ENCODE measurements at regions of chr22 and their contacts with region 1.

Region 1: GRCh38 chr22:23069502-23070357 is 589 bp upstream of the GNAZ start:
- DNase-seq: peak; percentile 79 to 95 (median 87)
- ATAC-seq: peak; percentile 95
- H3K4me3 ChIP-seq: peak overlapping the region; percentile 44 to 49
- H3K4me3 Mint-ChIP-seq: peak overlapping the region; percentile 86
- H3K27ac ChIP-seq: peak overlapping the region in 1 of 2 experiments; percentile 33
- H3K27ac Mint-ChIP-seq: no peak overlapping the region
- H3K4me1 ChIP-seq: peaks cover 11% of the 10 kb centered on the region
- H3K4me1 Mint-ChIP-seq: peaks cover 16% of the 10 kb centered on the region
- H3K27me3 ChIP-seq: no peaks in the 10 kb centered on the region
- H3K27me3 Mint-ChIP-seq: peaks cover 13% of the 10 kb centered on the region
- CTCF ChIP-seq: no peak

Region 2: DNA sequence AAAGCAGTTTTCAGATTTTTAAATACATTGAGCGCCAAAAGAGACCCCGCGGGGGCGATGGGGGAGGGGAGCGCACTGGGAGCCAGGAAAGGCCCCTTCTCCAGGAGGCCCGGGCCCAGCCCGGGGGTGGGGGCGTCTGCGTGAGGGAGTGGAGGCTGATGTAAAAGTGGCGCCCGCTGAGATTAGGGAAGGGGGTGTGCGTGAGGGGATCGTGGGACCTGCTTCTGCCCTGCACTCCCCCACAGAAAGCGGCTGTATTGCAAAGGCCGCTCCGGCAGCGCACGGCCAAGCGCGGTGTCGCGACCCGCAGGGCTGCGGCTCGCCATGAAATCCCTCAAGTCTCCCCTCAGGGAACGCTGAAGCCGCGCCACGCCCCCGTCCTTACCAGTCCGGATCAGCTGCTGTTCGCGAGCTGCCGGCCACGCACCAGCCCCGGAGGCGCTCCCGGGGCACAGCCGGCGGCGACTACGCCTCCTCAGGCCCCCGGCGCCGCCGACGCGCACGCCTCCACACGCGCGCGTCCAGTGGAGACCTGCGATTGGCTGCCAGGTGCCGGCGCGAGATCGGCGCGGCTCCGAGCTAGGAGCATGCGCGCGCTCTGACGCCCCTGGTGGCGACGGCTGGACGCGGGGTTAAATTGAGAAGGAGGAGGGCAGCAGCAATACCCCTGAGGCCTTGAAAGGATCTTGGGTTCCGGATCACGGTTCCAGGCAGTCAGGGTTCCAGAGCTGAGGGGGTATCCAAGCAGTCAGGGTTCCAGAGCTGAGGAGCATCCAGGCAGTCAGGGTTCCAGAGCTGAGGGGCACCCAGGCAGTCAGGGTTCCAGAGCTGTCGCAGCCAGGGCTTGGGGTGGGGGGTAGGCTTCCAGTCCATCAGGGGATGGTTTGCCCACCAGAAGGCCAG is 561.2 kb before region 1 on chr22 and contains the start of gene ZNF280B:
- CTCF ChIA-PET with region 1: no interaction called
- POLR2A ChIA-PET with region 1: no interaction called
- intact Hi-C with region 1: no loop called
- DNase-seq: peak; percentile 67 to 91 (median 80)
- ATAC-seq: peak; percentile 99
- H3K4me3 ChIP-seq: peak within 1 kb of the TSS; percentile 77 to 84
- H3K4me3 Mint-ChIP-seq: peak within 1 kb of the TSS; percentile 83
- H3K27ac ChIP-seq: peak within 1 kb of the TSS; percentile 45 to 57
- H3K27ac Mint-ChIP-seq: peak within 1 kb of the TSS; percentile 37
- H3K4me1 ChIP-seq: peaks cover 11% of the 10 kb centered on the region
- H3K4me1 Mint-ChIP-seq: peaks cover 22% of the 10 kb centered on the region
- H3K27me3 ChIP-seq: no peaks in the 10 kb centered on the region
- H3K27me3 Mint-ChIP-seq: peaks cover 3% of the 10 kb centered on the region
- CTCF ChIP-seq: peak; percentile 67
- total RNA-seq, gene ZNF280B: 1.6 to 1.7 TPM

Region 3: DNA sequence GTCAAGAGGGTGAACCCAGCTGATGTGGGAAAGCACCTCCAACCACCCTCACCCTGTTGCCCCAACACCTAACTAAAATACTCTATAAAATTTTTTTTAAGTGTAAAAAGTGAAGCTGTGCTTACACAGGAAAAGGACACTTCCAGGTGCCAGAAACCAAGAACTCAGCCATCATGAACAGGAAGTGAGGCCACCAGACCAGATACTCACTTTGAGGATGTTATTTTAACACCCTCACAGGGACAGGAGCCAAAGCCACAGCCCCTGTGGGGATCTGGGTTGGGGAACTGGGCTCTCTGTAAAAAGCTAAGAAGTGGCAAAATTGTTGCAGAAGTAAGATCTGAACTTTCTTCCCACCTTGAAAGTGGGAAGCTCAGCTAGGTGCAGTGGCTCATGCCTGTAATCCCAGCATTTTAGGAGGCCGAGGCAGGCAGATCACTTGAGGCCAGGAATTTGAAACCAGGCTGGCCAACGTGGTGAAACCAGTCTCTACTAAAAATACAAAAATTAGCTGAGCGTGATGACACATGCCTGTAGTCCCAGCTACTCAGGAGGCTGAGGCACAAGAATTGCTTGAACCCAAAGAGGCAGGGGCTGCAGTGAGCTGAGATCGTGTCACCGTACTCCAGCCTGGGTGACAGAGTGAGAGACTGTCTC is 68.3 kb after region 1 on chr22:
- CTCF ChIA-PET with region 1: no interaction called
- POLR2A ChIA-PET with region 1: interaction called, 5 read pairs
- intact Hi-C with region 1: loop called in 1 of 2 experiments (anchors 2 kb)
- DNase-seq: peak in 8 of 9 experiments; percentile 34 to 93 (median 65)
- ATAC-seq: peak; percentile 43
- H3K4me3 ChIP-seq: no peak overlapping the region
- H3K4me3 Mint-ChIP-seq: peak overlapping the region; percentile 61
- H3K27ac ChIP-seq: peak overlapping the region; percentile 55 to 88
- H3K27ac Mint-ChIP-seq: peak overlapping the region; percentile 94
- H3K4me1 ChIP-seq: peaks cover 61% of the 10 kb centered on the region
- H3K4me1 Mint-ChIP-seq: peaks cover 62% of the 10 kb centered on the region
- H3K27me3 ChIP-seq: no peaks in the 10 kb centered on the region
- H3K27me3 Mint-ChIP-seq: no peaks in the 10 kb centered on the region
- CTCF ChIP-seq: no peak